HCT116 (cell line): ENCODE measurements at regions of chr17 and their contacts with region 1.

Region 1: DNA sequence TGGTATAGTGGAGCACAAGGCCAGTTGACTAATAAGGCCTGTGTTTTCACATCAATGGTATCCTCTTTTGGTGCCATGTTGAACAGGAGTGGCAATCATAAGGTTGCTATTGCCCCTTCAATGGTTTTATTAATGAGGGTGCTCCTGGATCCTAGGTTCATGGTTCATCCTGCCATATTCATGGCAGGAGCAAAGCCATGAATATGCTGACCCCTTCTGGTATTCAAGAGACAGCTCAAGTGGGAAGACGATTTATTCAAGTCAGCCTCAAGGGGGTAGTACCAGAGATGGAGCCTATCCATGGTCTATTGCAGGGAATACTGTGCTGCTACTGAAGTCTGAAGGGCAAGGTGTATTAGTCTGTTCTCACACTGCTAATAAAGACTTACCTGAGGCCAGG is 2.6 kb downstream of the ABCA9 start:
- DNase-seq: peak; percentile 31
- ATAC-seq: peak; percentile 91
- H3K4me3 ChIP-seq: no peak overlapping the region
- H3K27ac ChIP-seq: no peak overlapping the region
- H3K4me1 ChIP-seq: no peaks in the 10 kb centered on the region
- H3K27me3 ChIP-seq: no peaks in the 10 kb centered on the region
- CTCF ChIP-seq: peak; percentile 64 to 95 (median 67)
- POLR2A ChIP-seq: no peak
- RAD21 ChIP-seq: peak; percentile 71

Region 2: DNA sequence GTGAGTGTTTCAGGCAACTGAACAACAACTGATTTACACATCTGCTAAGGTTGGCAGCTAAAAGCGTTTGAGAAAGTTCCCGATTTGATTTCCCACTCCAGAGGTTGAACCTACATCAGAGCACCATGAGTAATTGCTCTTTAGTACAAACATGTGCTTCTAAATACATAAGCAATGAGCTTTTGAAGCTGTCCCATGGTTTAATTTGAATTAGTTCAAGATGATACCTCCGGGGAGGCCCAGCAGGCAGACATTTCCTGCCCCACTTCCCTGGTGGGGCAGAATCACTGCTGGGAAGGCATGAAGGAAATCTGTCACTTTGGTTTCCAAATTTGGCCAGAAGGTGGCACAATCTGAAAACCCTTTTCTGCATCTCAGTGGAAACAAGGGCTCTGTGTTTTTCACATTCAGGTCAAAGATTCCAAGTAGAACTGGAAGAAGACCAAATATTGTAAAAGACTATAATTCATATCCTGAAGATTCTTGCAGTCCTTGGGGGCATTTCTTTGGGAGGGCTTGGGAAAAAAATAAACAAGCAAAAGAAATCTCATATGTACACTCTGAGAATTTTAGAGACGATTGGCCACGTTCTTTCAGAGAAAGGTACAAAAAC is 280.8 kb before region 1 on chr17:
- CTCF ChIA-PET with region 1: interaction called, 8 read pairs
- POLR2A ChIA-PET with region 1: no interaction called
- RAD21 ChIA-PET with region 1: no interaction called
- intact Hi-C with region 1: loop called (anchors 1 kb)
- DNase-seq: peak; percentile 51
- ATAC-seq: peak; percentile 46
- H3K4me3 ChIP-seq: no peak overlapping the region
- H3K27ac ChIP-seq: no peak overlapping the region
- H3K4me1 ChIP-seq: peaks cover 4 to 9% of the 10 kb centered on the region in 2 experiments; a peak in 3 of 4 replicates
- H3K27me3 ChIP-seq: no peaks in the 10 kb centered on the region
- CTCF ChIP-seq: peak; percentile 77 to 95 (median 87)
- POLR2A ChIP-seq: no peak
- RAD21 ChIP-seq: peak; percentile 94

Region 3: GRCh38 chr17:69031839-69032238 is 26.3 kb before region 1 on chr17:
- CTCF ChIA-PET with region 1: no interaction called
- POLR2A ChIA-PET with region 1: no interaction called
- RAD21 ChIA-PET with region 1: no interaction called
- intact Hi-C with region 1: no loop called
- DNase-seq: no peak
- ATAC-seq: no peak
- H3K4me3 ChIP-seq: no peak overlapping the region
- H3K27ac ChIP-seq: no peak overlapping the region
- H3K4me1 ChIP-seq: no peaks in the 10 kb centered on the region
- H3K27me3 ChIP-seq: no peaks in the 10 kb centered on the region
- CTCF ChIP-seq: no peak
- POLR2A ChIP-seq: no peak
- RAD21 ChIP-seq: no peak

Region 4: DNA sequence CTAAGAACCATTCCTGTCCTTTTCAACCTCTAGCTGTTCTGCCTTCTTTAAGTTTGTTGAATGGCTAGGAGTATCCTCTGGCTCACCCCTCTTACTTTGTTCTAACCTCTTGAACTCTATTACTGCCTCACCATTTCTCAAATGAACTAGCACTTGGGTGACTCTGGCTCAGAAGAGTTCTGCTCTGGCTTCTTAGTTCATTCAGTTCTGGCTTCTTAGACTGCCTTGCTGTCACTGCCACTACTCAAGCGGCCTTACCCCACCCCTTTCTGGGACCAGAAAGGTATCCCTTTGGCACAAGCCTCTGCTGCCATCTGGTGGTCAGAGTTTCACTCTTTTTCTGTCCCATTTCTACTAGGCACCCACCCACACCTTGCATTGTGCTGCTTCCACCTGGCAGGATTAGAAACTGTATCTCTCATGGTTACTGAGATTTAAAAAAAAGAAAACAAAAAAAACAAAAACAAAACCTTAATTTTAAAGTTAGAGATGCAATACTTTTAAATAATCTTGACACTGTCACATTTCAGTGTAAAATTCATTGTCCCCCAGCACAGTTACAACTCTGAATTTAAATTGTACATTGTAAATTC is 177.3 kb after region 1 on chr17:
- CTCF ChIA-PET with region 1: interaction called, 5 read pairs
- POLR2A ChIA-PET with region 1: no interaction called
- RAD21 ChIA-PET with region 1: no interaction called
- intact Hi-C with region 1: loop called (anchors 1 kb)
- DNase-seq: peak; percentile 89
- ATAC-seq: peak; percentile 99
- H3K4me3 ChIP-seq: no peak overlapping the region
- H3K27ac ChIP-seq: no peak overlapping the region
- H3K4me1 ChIP-seq: 0 out of 4 replicates have a peak, but pooled peaks cover 0 to 3% of the 10 kb centered on the region in 2 experiments
- H3K27me3 ChIP-seq: no peaks in the 10 kb centered on the region
- CTCF ChIP-seq: peak; percentile 82 to 97 (median 97)
- POLR2A ChIP-seq: no peak
- RAD21 ChIP-seq: peak; percentile 98